ENCODE measurements at regions of chr7 and their contacts with region 1.

Region 1: GRCh38 chr7:76047811-76048667 is at the starts of genes MDH2 and STYXL1:
- DNase-seq: peak; percentile 97 to 98
- ATAC-seq: peak; percentile 98
- H3K4me3 ChIP-seq: peak within 1 kb of the TSS; percentile 98
- H3K27ac ChIP-seq: peak within 1 kb of the TSS; percentile 97 to 98
- H3K4me1 ChIP-seq: peaks cover 25% of the 10 kb centered on the region; the same call in 2 of the 3 replicates
- CTCF ChIP-seq: no peak
- EP300 ChIP-seq: no peak
- POLR2A ChIP-seq: peak; percentile 87
- RAD21 ChIP-seq: no peak; a peak in 1 of 5 replicates
- polyA plus RNA-seq, gene MDH2: 164 and 190 TPM in 2 replicates
- polyA plus RNA-seq, gene STYXL1: 73.8 and 76.8 TPM in 2 replicates

Region 2: DNA sequence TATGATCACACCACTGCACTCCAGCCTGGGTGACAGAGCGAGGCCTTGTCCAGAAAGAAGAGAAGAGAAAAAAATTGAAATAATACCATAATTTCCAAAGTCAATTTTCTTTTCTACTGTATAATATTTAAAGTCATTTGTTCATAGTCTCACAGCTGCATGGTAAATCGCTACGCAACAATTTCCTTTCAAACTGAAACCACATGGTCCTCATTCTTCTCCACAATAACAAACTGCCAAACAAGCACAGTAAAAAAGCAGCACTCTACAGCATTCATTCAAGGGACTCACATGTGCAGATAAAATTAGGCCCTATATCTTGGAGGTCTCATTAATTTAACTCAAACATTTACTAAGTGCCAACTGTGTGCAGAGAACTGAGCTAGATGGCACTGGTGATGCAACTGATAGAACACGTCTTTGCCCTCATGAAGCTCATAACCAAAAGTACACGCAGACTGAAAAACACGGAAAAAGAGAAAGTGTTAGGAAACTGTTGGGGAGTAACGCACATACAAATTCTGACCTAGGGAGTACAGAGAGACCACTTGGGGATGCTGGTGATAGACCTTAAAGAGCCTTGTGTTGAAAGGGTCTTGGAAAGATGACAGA is 85.2 kb after region 1 on chr7:
- CTCF ChIA-PET with region 1: interaction called, 26 read pairs
- POLR2A ChIA-PET with region 1: interaction called, 3 read pairs
- DNase-seq: no peak
- ATAC-seq: no peak
- H3K4me3 ChIP-seq: no peak overlapping the region
- H3K27ac ChIP-seq: no peak overlapping the region
- H3K4me1 ChIP-seq: peaks cover 11% of the 10 kb centered on the region; the same call in 2 of the 3 replicates
- CTCF ChIP-seq: no peak
- EP300 ChIP-seq: no peak
- POLR2A ChIP-seq: no peak
- RAD21 ChIP-seq: no peak